Activated T-helper 1 cell treated with anti-CD3 and anti-CD28 coated beads, Interleukin-12 subunit alpha, Interleukin-12 subunit beta, Interleukin-2, Interleukin-4 antibody, amounts not matched to agents 30 ng/mL and 10 ng/mL and 1 ng/mL, durations not matched to agents 14 hours and 24 hours and 36 hours (primary cell): ENCODE measurements at regions of chr16 and their contacts with region 1.

Region 1: GRCh38 chr16:76622876-76623275 is 345.7 kb downstream of the CNTNAP4 start:
- DNase-seq: no peak
- H3K4me3 Mint-ChIP-seq: no peak overlapping the region
- H3K27ac Mint-ChIP-seq: no peak overlapping the region
- H3K4me1 Mint-ChIP-seq: no peaks in the 10 kb centered on the region
- H3K27me3 Mint-ChIP-seq: no peaks in the 10 kb centered on the region

Region 2: GRCh38 chr16:76287466-76287865 is 335.4 kb before region 1 on chr16:
- intact Hi-C with region 1: no loop called
- DNase-seq: no peak
- H3K4me3 Mint-ChIP-seq: no peak overlapping the region
- H3K27ac Mint-ChIP-seq: no peak overlapping the region
- H3K4me1 Mint-ChIP-seq: no peaks in the 10 kb centered on the region
- H3K27me3 Mint-ChIP-seq: no peaks in the 10 kb centered on the region

Region 3: GRCh38 chr16:76681296-76681695 is 58.4 kb after region 1 on chr16:
- intact Hi-C with region 1: loop called (anchors 10 kb)
- DNase-seq: no peak
- H3K4me3 Mint-ChIP-seq: no peak overlapping the region
- H3K27ac Mint-ChIP-seq: no peak overlapping the region
- H3K4me1 Mint-ChIP-seq: no peaks in the 10 kb centered on the region
- H3K27me3 Mint-ChIP-seq: no peaks in the 10 kb centered on the region